H1 (cell line): ENCODE measurements at regions of chr10 and their contacts with region 1.

Region 1: GRCh38 chr10:77710759-77711682 is 73.4 kb upstream of the KCNMA1 start:
- DNase-seq: peak; percentile 62 to 99
- H3K4me3 ChIP-seq: peak overlapping the region; percentile 10 to 56 (median 42); a peak in 7 of 8 replicates
- H3K27ac ChIP-seq: no peak overlapping the region
- H3K4me1 ChIP-seq: peaks cover 6 to 24% (median 20%) of the 10 kb centered on the region in 4 experiments
- H3K27me3 ChIP-seq: peaks cover 0 to 11% (median 0%) of the 10 kb centered on the region in 4 experiments; a peak in 4 of 7 replicates
- CTCF ChIP-seq: peak; percentile 96 to 100 (median 99)
- EP300 ChIP-seq: peak in 1 of 2 experiments; percentile 11; a peak in 1 of 3 replicates
- POLR2A ChIP-seq: no peak; a peak in 1 of 3 replicates
- RAD21 ChIP-seq: peak; percentile 82 to 93

Region 2: DNA sequence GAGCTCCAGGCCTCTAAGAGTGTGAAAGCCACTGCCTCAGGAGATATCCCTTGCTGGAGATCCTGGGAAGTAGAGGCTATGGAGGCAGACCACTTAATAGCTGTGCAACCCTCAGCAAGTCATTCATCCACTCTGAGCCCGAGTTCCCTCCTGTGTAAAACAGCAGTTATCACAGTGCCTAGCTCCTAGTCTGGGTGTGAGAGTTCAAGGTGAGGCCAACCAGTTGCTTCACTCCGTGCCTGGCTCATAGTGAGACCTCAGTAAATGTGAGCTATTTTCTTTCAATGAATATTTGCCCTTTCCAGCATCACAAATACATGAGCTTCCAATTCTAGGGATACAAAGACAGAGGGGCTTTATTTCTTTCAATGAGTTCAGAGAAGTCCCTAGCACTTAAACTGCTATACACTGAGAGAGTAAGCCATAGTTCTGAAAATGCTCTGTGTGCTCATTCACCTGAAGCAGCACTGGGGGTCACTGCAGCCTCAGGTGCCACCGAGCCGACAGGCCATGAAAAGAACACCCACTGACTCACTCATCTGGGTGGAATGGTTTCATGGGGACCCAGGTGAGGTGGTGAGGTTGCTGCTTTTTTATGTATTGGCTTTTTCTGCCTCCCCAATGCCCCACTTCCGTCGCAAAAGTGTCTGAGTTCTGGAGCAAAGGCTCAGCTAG is 333.2 kb before region 1 on chr10:
- CTCF ChIA-PET with region 1: interaction called, 12 read pairs
- POLR2A ChIA-PET with region 1: no interaction called
- DNase-seq: no peak
- H3K4me3 ChIP-seq: no peak overlapping the region
- H3K27ac ChIP-seq: no peak overlapping the region
- H3K4me1 ChIP-seq: no peaks in the 10 kb centered on the region
- H3K27me3 ChIP-seq: no peaks in the 10 kb centered on the region
- CTCF ChIP-seq: peak; percentile 42 to 56 (median 44)
- EP300 ChIP-seq: no peak
- POLR2A ChIP-seq: no peak
- RAD21 ChIP-seq: peak; percentile 81 to 85

Region 3: DNA sequence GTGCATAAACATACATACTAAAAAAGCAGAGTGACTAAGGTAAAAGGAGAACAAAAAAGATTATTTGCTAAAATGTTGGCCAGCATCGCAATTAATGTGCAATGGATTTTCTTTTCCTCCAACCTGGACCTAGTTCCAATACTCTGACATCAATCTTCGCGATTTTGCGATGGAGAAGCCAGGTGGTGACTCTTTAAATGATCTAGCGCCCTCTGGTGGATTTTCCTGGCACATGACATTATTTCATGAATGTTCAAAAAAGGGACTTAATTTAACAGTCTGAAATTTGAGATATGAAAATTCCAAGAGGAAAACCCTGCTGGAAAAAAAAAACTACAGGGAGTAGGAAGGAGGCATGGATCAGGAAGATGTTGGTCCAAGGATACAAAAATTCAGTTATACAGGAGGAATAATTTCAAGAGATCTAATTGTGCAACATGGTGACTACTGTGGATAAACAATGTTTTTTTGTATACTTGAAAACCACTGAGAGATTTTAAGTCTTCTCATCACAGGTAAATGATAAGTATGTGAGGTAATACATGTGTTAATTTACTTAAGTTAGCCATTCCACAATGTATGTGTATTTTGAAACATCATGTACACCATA is 69.1 kb before region 1 on chr10:
- CTCF ChIA-PET with region 1: interaction called, 31 read pairs
- POLR2A ChIA-PET with region 1: no interaction called
- DNase-seq: peak in 1 of 2 experiments; percentile 71
- H3K4me3 ChIP-seq: no peak overlapping the region
- H3K27ac ChIP-seq: no peak overlapping the region
- H3K4me1 ChIP-seq: peaks cover 0 to 6% (median 4%) of the 10 kb centered on the region in 4 experiments; a peak in 6 of 7 replicates
- H3K27me3 ChIP-seq: peaks cover 11 to 37% (median 34%) of the 10 kb centered on the region in 4 experiments
- CTCF ChIP-seq: peak in 2 of 3 experiments; percentile 69 to 71; a peak in 3 of 4 replicates
- EP300 ChIP-seq: no peak
- POLR2A ChIP-seq: no peak
- RAD21 ChIP-seq: peak; percentile 87 to 89

Region 4: GRCh38 chr10:77667426-77668324 is 43.3 kb before region 1 on chr10:
- CTCF ChIA-PET with region 1: interaction called, 17 read pairs
- POLR2A ChIA-PET with region 1: no interaction called
- DNase-seq: no peak
- H3K4me3 ChIP-seq: no peak overlapping the region
- H3K27ac ChIP-seq: no peak overlapping the region
- H3K4me1 ChIP-seq: peaks cover 0 to 6% (median 0%) of the 10 kb centered on the region in 4 experiments; a peak in 1 of 7 replicates
- H3K27me3 ChIP-seq: no peaks in the 10 kb centered on the region
- CTCF ChIP-seq: no peak
- EP300 ChIP-seq: no peak
- POLR2A ChIP-seq: no peak
- RAD21 ChIP-seq: no peak

Region 5: GRCh38 chr10:77682393-77683087 is 28.5 kb before region 1 on chr10:
- CTCF ChIA-PET with region 1: interaction called, 112 read pairs
- POLR2A ChIA-PET with region 1: interaction called, 4 read pairs
- DNase-seq: no peak
- H3K4me3 ChIP-seq: no peak overlapping the region
- H3K27ac ChIP-seq: no peak overlapping the region
- H3K4me1 ChIP-seq: peaks cover 0 to 26% (median 15%) of the 10 kb centered on the region in 4 experiments
- H3K27me3 ChIP-seq: no peaks in the 10 kb centered on the region
- CTCF ChIP-seq: no peak
- EP300 ChIP-seq: no peak
- POLR2A ChIP-seq: no peak
- RAD21 ChIP-seq: no peak

Region 6: GRCh38 chr10:77721815-77722214 is 10.8 kb after region 1 on chr10:
- CTCF ChIA-PET with region 1: interaction called, 15 read pairs
- POLR2A ChIA-PET with region 1: no interaction called
- DNase-seq: no peak
- H3K4me3 ChIP-seq: no peak overlapping the region
- H3K27ac ChIP-seq: no peak overlapping the region
- H3K4me1 ChIP-seq: peaks cover 0 to 3% (median 0%) of the 10 kb centered on the region in 4 experiments; a peak in 1 of 7 replicates
- H3K27me3 ChIP-seq: no peaks in the 10 kb centered on the region
- CTCF ChIP-seq: no peak
- EP300 ChIP-seq: no peak
- POLR2A ChIP-seq: no peak
- RAD21 ChIP-seq: no peak

Region 7: GRCh38 chr10:77756319-77757232 is 45.6 kb after region 1 on chr10:
- CTCF ChIA-PET with region 1: interaction called, 45 read pairs
- POLR2A ChIA-PET with region 1: no interaction called
- DNase-seq: peak; percentile 56 to 76
- H3K4me3 ChIP-seq: peak overlapping the region in 1 of 4 experiments; percentile 31; a peak in 1 of 8 replicates
- H3K27ac ChIP-seq: no peak overlapping the region; the same call in 1 of the 2 replicates
- H3K4me1 ChIP-seq: peaks cover 0 to 3% (median 0%) of the 10 kb centered on the region in 4 experiments; a peak in 2 of 7 replicates
- H3K27me3 ChIP-seq: no peaks in the 10 kb centered on the region
- CTCF ChIP-seq: peak; percentile 67 to 87 (median 84)
- EP300 ChIP-seq: no peak
- POLR2A ChIP-seq: no peak
- RAD21 ChIP-seq: peak; percentile 89 to 95